ENCODE measurements at regions of chr4 and their contacts with region 1.

Region 1: GRCh38 chr4:69167300-69167699 is 47.2 kb downstream of the UGT2B11 start:
- DNase-seq: no peak
- H3K4me3 ChIP-seq: no peak overlapping the region
- H3K27ac ChIP-seq: no peak overlapping the region
- H3K4me1 ChIP-seq: no peaks in the 10 kb centered on the region
- H3K27me3 ChIP-seq: no peaks in the 10 kb centered on the region
- CTCF ChIP-seq: no peak
- EP300 ChIP-seq: no peak
- RAD21 ChIP-seq: no peak

Region 2: GRCh38 chr4:68498413-68499007 is 668.8 kb before region 1 on chr4:
- CTCF ChIA-PET with region 1: interaction called, 21 read pairs
- POLR2A ChIA-PET with region 1: no interaction called
- DNase-seq: peak; percentile 33
- H3K4me3 ChIP-seq: no peak overlapping the region; a peak in 1 of 4 replicates
- H3K27ac ChIP-seq: no peak overlapping the region
- H3K4me1 ChIP-seq: no peaks in the 10 kb centered on the region
- H3K27me3 ChIP-seq: no peaks in the 10 kb centered on the region; the same call in 1 of the 2 replicates
- CTCF ChIP-seq: peak; percentile 95
- EP300 ChIP-seq: no peak
- RAD21 ChIP-seq: peak; percentile 91

Measured in SK-N-SH (cell line).